Naive thymus-derived CD8-positive, alpha-beta T cell (primary cell): ENCODE measurements at regions of chr1 and their contacts with region 1.

Region 1: DNA sequence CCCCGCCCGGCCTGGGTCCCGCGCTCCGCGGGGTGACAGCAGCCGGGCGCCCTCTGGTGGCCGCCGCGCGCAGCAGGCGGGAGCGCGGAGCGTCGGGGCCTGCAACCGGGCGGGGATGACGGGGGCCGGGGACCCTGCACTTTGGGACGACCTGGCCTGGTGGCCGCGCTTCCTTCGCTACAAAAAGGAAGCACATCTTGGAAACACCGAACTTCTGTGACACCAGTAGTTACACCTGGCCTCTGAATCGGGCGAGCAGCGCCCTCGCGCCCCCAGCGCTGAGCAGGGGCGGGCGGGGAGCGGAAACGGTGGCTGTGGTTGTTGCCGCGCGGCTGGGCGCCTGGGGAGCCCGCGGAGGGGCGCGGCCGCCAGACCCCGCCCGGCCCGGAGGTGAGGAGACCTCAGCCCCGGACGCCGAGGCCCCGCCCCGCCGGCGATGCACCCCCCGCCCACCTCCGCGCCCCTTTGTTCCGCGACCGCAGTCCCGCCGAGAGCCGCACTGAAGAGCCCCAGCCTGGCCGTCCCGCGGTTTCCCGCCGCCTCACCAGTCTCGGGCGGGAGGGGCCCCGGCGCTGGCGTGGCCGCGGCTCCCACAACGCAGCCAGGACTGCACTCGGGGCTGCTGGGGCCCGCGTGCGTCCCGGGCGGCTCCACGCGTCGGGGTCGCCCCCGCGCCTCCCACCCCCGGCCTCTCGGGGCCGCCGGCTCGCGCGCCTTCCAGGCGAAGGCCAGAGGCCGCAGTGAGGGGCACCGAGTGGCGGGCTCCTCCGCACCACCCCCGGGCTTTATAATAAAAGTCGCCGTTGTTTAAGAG is 59.3 kb downstream of the H3-3A start:
- DNase-seq: peak; percentile 51 to 87 (median 74)
- ATAC-seq: peak; percentile 64 to 69
- H3K4me3 Mint-ChIP-seq: peak overlapping the region; percentile 49 to 89 (median 82)
- H3K27ac Mint-ChIP-seq: peak overlapping the region in 6 of 10 donors; percentile 36 to 98 (median 84)
- H3K4me1 Mint-ChIP-seq: peaks cover 17 to 67% (median 38%) of the 10 kb centered on the region in 4 donors
- H3K27me3 Mint-ChIP-seq: peaks cover 0 to 3% (median 0%) of the 10 kb centered on the region in 5 donors

Region 2: DNA sequence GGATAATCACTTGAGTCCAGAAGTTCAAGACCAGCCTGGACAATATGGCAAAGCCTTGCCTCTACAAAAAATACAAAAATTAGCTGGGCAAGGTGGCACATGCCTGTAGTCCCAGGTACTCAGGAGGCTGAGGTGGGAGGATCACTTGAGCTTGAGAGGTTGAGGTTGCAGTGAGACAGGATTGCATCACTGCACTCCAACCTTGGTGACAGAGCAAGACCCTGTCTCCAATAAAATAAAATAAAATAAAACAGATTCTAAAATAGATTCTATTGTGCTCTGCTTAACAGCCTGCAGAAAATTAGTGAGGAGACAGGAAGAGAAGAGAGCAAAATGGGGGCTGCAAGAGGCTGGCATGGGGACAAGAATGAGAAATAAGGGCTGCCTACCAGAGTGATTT is 115.1 kb before region 1 on chr1:
- POLR2A ChIA-PET with region 1: no interaction called
- DNase-seq: no peak
- ATAC-seq: no peak
- H3K4me3 Mint-ChIP-seq: no peak overlapping the region
- H3K27ac Mint-ChIP-seq: peak overlapping the region in 1 of 10 donors; percentile 82
- H3K4me1 Mint-ChIP-seq: peaks cover 18 to 36% (median 30%) of the 10 kb centered on the region in 4 donors
- H3K27me3 Mint-ChIP-seq: no peaks in the 10 kb centered on the region

Region 3: GRCh38 chr1:226083302-226084101 is 38.3 kb before region 1 on chr1:
- POLR2A ChIA-PET with region 1: interaction called, 15 read pairs
- DNase-seq: peak; percentile 84 to 96 (median 91)
- ATAC-seq: peak; percentile 94
- H3K4me3 Mint-ChIP-seq: peak overlapping the region; percentile 87 to 97 (median 92)
- H3K27ac Mint-ChIP-seq: peak overlapping the region in 8 of 10 donors; percentile 59 to 92 (median 84)
- H3K4me1 Mint-ChIP-seq: peaks cover 5 to 18% (median 11%) of the 10 kb centered on the region in 4 donors
- H3K27me3 Mint-ChIP-seq: peaks cover 0 to 3% (median 0%) of the 10 kb centered on the region in 5 donors

Region 4: GRCh38 chr1:226097866-226098625 is 23.7 kb before region 1 on chr1:
- POLR2A ChIA-PET with region 1: no interaction called
- DNase-seq: no peak
- ATAC-seq: no peak
- H3K4me3 Mint-ChIP-seq: no peak overlapping the region
- H3K27ac Mint-ChIP-seq: no peak overlapping the region
- H3K4me1 Mint-ChIP-seq: peaks cover 4 to 15% (median 14%) of the 10 kb centered on the region in 4 donors
- H3K27me3 Mint-ChIP-seq: peaks cover 4 to 12% (median 9%) of the 10 kb centered on the region in 5 donors

Region 5: GRCh38 chr1:226109829-226110248 is 12.0 kb before region 1 on chr1:
- POLR2A ChIA-PET with region 1: interaction called, 55 read pairs
- DNase-seq: peak; percentile 41 to 86 (median 74)
- ATAC-seq: peak; percentile 81 to 82
- H3K4me3 Mint-ChIP-seq: peak overlapping the region; percentile 87 to 96 (median 92)
- H3K27ac Mint-ChIP-seq: peak overlapping the region; percentile 79 to 96 (median 90)
- H3K4me1 Mint-ChIP-seq: peaks cover 15 to 34% (median 25%) of the 10 kb centered on the region in 4 donors
- H3K27me3 Mint-ChIP-seq: no peaks in the 10 kb centered on the region

Region 6: DNA sequence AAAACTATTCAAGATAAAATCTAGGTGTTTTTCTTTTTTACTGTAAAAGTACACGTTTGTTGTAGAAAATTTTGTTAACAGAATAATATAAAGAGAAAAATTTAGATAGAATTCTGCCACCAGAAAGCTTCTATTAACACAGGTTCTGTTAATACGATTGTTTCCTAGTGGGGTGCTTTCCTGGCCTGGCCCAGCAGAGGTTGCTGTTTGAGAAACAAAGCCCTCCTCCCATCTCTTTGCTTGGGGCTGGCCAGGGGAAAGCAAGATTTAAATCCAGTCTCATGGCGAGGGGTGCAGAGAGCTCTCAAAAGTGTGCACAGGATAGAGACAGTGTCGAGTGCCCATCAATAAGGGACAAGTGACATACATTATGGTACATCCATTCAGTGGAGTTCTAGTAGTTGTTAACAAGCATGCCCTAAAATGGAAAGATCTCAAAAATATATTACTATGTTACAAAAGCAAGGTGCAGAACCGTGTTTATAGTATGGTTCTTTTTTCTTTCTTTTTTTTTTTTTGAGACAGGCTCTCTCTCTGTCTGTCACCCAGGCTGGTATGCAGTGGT is 79.3 kb after region 1 on chr1:
- POLR2A ChIA-PET with region 1: interaction called, 11 read pairs
- DNase-seq: no peak
- ATAC-seq: no peak
- H3K4me3 Mint-ChIP-seq: no peak overlapping the region
- H3K27ac Mint-ChIP-seq: no peak overlapping the region
- H3K4me1 Mint-ChIP-seq: peaks cover 3 to 6% (median 5%) of the 10 kb centered on the region in 4 donors
- H3K27me3 Mint-ChIP-seq: peaks cover 2 to 20% (median 10%) of the 10 kb centered on the region in 5 donors